GM10248 (cell line): ENCODE measurements at regions of chr21 and their contacts with region 1.

Region 1: GRCh38 chr21:29245104-29245643 is 53.5 kb upstream of the BACH1 start:
- DNase-seq: peak; percentile 22
- CTCF ChIP-seq: no peak

Region 2: DNA sequence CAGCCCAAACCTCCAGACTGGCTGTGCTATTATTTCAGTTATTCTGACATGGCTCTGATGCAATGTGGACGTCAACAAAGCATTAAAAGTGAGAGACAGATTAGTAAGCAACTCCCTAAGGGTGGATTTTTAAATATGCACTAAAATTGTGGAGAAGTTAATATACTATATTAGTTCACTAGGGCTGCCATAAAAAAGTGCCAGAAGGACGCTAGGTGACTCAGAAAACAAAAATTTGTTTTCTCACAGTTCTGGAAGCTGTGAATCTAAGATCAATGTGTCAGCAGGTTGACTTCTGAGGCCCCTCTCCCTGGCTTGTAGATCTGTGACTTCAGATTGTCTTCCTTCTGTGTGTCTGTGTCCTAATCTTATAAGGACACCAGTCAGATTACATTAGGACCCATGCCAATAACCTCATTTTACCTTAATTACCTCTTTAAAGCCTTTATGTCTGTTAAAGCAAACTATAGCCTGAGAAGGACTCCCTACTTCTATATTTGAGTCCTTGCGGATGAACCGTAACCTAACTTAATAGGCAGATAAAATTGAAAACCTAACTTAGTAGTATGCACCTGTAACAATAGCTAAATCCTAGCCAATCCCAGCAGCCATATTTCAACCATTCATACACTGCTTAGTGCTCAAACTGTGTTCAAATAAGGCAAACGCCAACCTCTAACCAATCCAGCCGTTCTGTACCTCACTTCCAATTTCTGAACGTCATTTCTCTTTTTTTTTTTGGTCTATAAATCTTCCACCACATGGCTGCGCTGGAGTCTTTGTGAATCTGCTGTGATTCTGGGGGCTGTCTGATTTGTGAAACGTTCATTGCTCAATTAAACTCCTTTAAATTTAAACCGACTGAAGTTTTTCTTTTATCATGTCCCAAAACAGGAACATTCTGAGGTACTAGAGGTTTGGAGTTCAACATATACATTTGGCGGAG is 12.3 kb before region 1 on chr21:
- CTCF ChIA-PET with region 1: interaction called, 12 read pairs
- POLR2A ChIA-PET with region 1: interaction called, 6 read pairs
- DNase-seq: no peak
- CTCF ChIP-seq: no peak